ENCODE measurements at regions of chr2 and their contacts with region 1.

Region 1: DNA sequence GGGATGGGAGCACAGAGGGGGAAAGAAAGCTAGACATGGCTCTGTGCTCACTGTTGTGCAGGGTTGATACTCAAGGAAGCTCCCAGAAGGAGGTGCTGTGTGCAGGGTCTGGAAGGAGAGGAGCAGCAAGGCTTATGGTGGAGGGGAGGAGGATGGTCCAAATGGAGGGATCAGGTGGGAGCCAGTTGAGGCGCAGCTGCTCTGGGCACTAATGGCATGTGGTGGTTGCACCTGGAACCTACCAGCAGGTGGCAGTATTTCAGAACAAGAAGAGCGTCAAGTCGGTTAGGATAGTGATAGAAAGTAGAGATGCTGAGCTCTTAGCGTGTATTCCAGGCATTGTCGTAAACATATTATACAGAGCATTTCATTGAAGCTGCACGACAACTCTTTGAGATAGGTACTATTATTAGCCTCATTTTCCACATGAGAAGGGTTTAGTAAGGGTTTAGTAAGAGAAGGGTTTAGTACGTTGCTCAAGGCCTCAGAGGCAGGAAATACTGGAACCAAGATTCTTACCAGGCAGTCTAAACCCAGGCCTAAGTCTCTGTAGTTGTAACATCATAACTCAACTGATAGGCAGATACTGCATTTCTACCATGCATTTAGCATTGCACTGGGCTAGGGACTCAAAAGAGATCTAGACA is 223.7 kb downstream of the CYP26B1 start:
- DNase-seq: peak; percentile 43
- H3K4me3 Mint-ChIP-seq: no peak overlapping the region
- H3K27ac Mint-ChIP-seq: no peak overlapping the region
- H3K4me1 Mint-ChIP-seq: no peaks in the 10 kb centered on the region
- H3K27me3 Mint-ChIP-seq: no peaks in the 10 kb centered on the region

Region 2: DNA sequence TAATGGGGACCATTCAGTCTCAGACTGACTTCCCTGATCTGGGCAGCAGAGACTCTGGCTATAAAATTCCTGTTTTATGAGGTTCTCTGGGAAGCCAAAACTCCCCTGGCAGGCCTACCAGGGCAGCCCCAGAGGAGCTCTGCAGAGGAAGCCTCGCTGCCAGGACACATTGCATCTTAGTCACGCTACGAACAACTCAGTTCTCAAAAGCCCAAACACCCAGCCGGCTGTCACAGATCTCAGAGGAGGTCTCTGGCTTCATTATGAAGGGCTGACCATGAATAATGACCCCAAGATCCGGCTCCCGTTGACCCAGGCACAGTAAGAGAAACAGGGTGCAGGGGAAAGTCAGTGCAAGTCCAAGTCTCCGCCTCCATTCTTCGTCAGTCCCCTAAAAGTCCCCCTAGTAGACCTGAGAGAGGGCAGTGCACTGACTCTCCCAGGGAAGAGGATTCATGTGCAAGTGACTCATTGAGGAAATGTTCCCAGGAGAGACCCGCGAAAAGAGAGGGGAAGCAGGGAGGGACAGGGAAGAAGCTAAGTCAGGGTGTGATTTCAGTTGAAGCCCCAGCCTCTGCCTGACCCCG is 11.3 kb after region 1 on chr2:
- CTCF ChIA-PET with region 1: interaction called, 10 read pairs
- POLR2A ChIA-PET with region 1: no interaction called
- DNase-seq: peak; percentile 11
- H3K4me3 Mint-ChIP-seq: no peak overlapping the region
- H3K27ac Mint-ChIP-seq: no peak overlapping the region
- H3K4me1 Mint-ChIP-seq: no peaks in the 10 kb centered on the region
- H3K27me3 Mint-ChIP-seq: no peaks in the 10 kb centered on the region

Region 3: DNA sequence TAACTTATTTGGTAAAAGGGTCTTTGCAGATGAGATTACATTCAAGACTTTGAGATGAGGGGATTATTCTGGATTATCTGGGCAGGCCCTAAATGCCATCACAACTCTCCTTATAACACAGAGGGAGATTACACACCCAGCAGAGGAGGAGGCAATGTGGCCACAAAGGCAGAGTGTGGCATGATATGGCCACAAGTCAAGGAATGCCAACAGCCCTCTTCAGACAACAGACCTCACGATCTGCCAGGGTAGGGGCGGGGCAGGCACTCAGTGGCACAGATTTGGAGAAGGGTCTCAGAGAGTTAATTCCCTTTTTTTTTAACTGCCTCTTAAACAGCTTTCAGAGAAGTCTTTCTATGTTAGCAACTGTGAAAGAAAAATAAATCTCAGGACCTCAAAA is 126.7 kb after region 1 on chr2:
- CTCF ChIA-PET with region 1: no interaction called
- POLR2A ChIA-PET with region 1: no interaction called
- DNase-seq: no peak
- H3K4me3 Mint-ChIP-seq: no peak overlapping the region
- H3K27ac Mint-ChIP-seq: no peak overlapping the region
- H3K4me1 Mint-ChIP-seq: no peaks in the 10 kb centered on the region
- H3K27me3 Mint-ChIP-seq: no peaks in the 10 kb centered on the region

Region 4: GRCh38 chr2:72150157-72150865 is 226.3 kb after region 1 on chr2:
- CTCF ChIA-PET with region 1: interaction called, 26 read pairs
- POLR2A ChIA-PET with region 1: no interaction called
- DNase-seq: peak; percentile 60
- H3K4me3 Mint-ChIP-seq: peak overlapping the region; percentile 58
- H3K27ac Mint-ChIP-seq: peak overlapping the region; percentile 49
- H3K4me1 Mint-ChIP-seq: peaks cover 32% of the 10 kb centered on the region
- H3K27me3 Mint-ChIP-seq: peaks cover 61% of the 10 kb centered on the region